Spleen (tissue), 13 donors: ENCODE measurements at regions of chr15 and their contacts with region 1.

Region 1: GRCh38 chr15:64895285-64896065 is 16.2 kb upstream of the ANKDD1A start:
- DNase-seq: no peak
- H3K4me3 ChIP-seq: peak overlapping the region in 7 of 8 donors; percentile 5 to 63 (median 28)
- H3K27ac ChIP-seq: peak overlapping the region; percentile 87 to 99 (median 96)
- H3K4me1 ChIP-seq: peaks cover 60 to 92% (median 88%) of the 10 kb centered on the region in 6 donors
- H3K27me3 ChIP-seq: no peaks in the 10 kb centered on the region
- CTCF ChIP-seq: peak in 6 of 11 experiments; percentile 12 to 41 (median 27)
- POLR2A ChIP-seq: no peak

Region 2: GRCh38 chr15:64841258-64842095 is 54.0 kb before region 1 on chr15 and contains the start of gene PLEKHO2:
- intact Hi-C with region 1: loop called (anchors 5 kb)
- DNase-seq: peak; percentile 99
- H3K4me3 ChIP-seq: peak within 1 kb of the TSS; percentile 59 to 99 (median 83)
- H3K27ac ChIP-seq: peak within 1 kb of the TSS; percentile 91 to 99 (median 97)
- H3K4me1 ChIP-seq: peaks cover 29 to 90% (median 69%) of the 10 kb centered on the region in 6 donors
- H3K27me3 ChIP-seq: no peaks in the 10 kb centered on the region
- CTCF ChIP-seq: peak in 10 of 11 experiments; percentile 22 to 71 (median 42)
- POLR2A ChIP-seq: peak; percentile 70 to 94 (median 90)
- total RNA-seq, gene PLEKHO2: 124 to 249 (median 156) TPM